Activated CD4-positive, alpha-beta T cell treated with anti-CD3 and anti-CD28 coated beads, Interleukin-2, amount 10 ng/mL, durations not matched to agents 24 days and 14 days (primary cell): ENCODE measurements at regions of chr1 and their contacts with region 1.

Region 1: DNA sequence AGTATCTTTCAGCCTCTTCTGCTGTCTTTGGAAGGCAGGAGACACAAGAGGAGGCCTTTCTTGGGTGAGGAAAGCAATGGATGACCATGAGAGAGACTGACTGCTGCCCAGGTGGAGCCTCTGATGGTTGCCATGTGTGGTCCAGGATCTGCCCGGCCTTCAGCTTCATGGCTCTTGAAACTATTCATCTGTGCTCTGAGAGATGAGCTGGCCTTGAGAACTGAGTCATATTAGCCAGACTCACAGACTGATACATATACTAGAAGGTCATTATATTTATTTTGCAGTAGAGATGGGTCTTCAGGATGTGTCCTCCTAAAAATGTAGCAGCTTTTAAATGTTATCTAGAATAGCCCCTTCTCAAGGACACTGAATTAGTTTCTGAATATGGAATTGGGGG is 33.7 kb downstream of the PTGFRN start:
- DNase-seq: no peak
- H3K4me3 Mint-ChIP-seq: no peak overlapping the region
- H3K27ac Mint-ChIP-seq: peak overlapping the region; percentile 64
- H3K4me1 Mint-ChIP-seq: peaks cover 42% of the 10 kb centered on the region
- H3K27me3 Mint-ChIP-seq: no peaks in the 10 kb centered on the region

Region 2: GRCh38 chr1:116667575-116668105 is 275.8 kb before region 1 on chr1 and contains the start of gene IGSF3:
- intact Hi-C with region 1: no loop called
- DNase-seq: peak; percentile 84
- H3K4me3 Mint-ChIP-seq: peak within 1 kb of the TSS; percentile 82
- H3K27ac Mint-ChIP-seq: no peak within 1 kb of the TSS
- H3K4me1 Mint-ChIP-seq: peaks cover 8% of the 10 kb centered on the region
- H3K27me3 Mint-ChIP-seq: peaks cover 62% of the 10 kb centered on the region
- total RNA-seq, gene IGSF3: 2.1 and 2.2 TPM in 2 replicates

Region 3: GRCh38 chr1:117001254-117001927 is 58.0 kb after region 1 on chr1 and contains the start of gene CD101:
- intact Hi-C with region 1: loop called (anchors 5 kb)
- DNase-seq: peak; percentile 70
- H3K4me3 Mint-ChIP-seq: peak within 1 kb of the TSS; percentile 11
- H3K27ac Mint-ChIP-seq: peak within 1 kb of the TSS; percentile 66
- H3K4me1 Mint-ChIP-seq: peaks cover 29% of the 10 kb centered on the region
- H3K27me3 Mint-ChIP-seq: peaks cover under 1% of the 10 kb centered on the region
- total RNA-seq, gene CD101: 0.82 and 1.2 TPM in 2 replicates